A673 (cell line): ENCODE measurements at regions of chr6 and their contacts with region 1.

Region 1: DNA sequence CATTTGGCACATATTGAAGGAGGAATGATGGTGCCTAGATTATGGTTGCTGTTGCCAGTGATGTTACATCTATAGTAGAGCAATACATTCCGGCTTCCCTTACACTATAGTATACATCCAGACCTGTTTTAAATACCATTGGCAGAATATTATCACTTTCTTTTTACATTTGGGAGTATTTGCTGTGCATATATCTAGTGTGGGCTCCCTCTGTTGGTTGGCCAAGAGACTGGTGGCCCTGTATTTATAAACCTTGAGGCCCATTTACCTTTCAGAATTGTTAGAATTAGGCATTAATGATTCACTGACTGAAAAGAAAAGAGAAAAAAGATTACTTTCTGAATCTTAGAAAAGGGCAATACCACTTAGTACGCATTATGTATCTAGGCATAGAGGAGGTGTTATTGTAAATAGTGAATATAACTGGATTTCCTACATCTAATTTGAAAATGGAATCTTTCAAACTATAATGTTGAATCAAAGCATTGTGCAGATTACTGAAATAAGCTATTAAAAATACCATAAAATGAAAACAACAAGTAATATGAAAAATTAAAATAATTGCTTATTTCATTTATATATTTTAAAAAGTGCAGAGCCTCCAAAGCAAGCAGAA is 628.8 kb upstream of the MAN1A1 start:
- DNase-seq: peak; percentile 3
- H3K4me3 ChIP-seq: no peak overlapping the region
- H3K27ac ChIP-seq: no peak overlapping the region
- H3K4me1 ChIP-seq: no peaks in the 10 kb centered on the region
- H3K27me3 ChIP-seq: no peaks in the 10 kb centered on the region
- CTCF ChIP-seq: peak; percentile 48

Region 2: DNA sequence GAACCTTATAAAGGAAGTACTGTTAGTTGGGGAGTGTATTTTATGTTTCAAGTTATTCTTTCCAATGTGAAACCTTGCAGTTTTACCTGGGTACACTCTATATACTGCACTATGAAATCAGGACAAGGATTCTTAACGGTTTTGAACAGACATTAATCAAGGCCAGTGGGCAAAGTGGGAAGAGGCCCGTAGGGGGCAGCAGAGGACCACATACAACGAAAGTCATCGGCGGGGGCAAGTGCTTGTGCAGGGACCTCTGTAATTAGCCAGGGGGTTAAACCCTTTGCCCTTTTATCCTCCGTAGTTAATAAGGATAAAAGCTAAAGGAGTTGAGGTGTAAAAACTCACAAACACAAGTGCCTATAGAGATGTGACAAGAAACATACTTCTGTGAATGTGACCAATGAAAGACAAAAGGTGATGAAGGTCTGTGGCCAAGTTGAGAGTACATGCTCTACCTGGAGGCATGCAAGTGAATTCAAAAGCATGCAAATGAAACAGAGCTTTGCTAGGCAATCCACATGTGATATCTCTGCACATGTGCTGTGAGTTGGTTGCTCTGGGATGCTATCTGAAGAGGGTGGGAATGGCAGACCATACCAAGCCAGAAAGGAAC is 236.1 kb before region 1 on chr6:
- CTCF ChIA-PET with region 1: no interaction called
- POLR2A ChIA-PET with region 1: no interaction called
- intact Hi-C with region 1: loop called (anchors 5 kb)
- DNase-seq: peak; percentile 51
- H3K4me3 ChIP-seq: no peak overlapping the region
- H3K27ac ChIP-seq: no peak overlapping the region
- H3K4me1 ChIP-seq: no peaks in the 10 kb centered on the region
- H3K27me3 ChIP-seq: no peaks in the 10 kb centered on the region
- CTCF ChIP-seq: peak; percentile 88

Region 3: DNA sequence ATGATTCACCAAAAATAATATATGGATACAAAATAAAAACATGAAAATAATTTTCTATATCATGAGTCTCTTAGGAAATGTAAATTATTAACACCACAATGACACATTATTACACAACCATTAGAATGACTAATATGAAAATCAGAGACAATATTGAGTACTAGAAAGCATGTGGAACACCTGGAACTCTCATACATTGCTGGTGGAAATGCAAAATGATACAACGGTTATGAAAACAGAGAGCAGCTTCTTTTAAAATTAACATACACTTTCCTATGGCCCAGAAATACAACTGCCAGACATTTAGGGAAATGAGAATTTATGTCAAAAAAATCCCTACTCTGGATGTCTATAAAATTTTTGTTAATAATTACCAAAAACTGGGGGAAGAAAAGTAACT is 224.5 kb after region 1 on chr6:
- CTCF ChIA-PET with region 1: no interaction called
- POLR2A ChIA-PET with region 1: no interaction called
- intact Hi-C with region 1: no loop called
- DNase-seq: no peak
- H3K4me3 ChIP-seq: no peak overlapping the region
- H3K27ac ChIP-seq: no peak overlapping the region
- H3K4me1 ChIP-seq: no peaks in the 10 kb centered on the region
- H3K27me3 ChIP-seq: no peaks in the 10 kb centered on the region
- CTCF ChIP-seq: no peak